A549 (cell line): ENCODE measurements at regions of chr1 and their contacts with region 1.

Region 1: GRCh38 chr1:152047730-152048402 is 11.1 kb upstream of the S100A11 start:
- DNase-seq: peak; percentile 83 to 100
- ATAC-seq: peak; percentile 95
- H3K4me3 ChIP-seq: peak overlapping the region; percentile 43
- H3K27ac ChIP-seq: peak overlapping the region; percentile 95 to 96
- H3K4me1 ChIP-seq: peaks cover 45% of the 10 kb centered on the region
- CTCF ChIP-seq: peak; percentile 57; the same call in 2 of the 3 replicates
- EP300 ChIP-seq: no peak; a peak in 1 of 5 replicates
- POLR2A ChIP-seq: peak; percentile 66
- RAD21 ChIP-seq: peak; percentile 32 to 45; a peak in 4 of 5 replicates

Region 2: DNA sequence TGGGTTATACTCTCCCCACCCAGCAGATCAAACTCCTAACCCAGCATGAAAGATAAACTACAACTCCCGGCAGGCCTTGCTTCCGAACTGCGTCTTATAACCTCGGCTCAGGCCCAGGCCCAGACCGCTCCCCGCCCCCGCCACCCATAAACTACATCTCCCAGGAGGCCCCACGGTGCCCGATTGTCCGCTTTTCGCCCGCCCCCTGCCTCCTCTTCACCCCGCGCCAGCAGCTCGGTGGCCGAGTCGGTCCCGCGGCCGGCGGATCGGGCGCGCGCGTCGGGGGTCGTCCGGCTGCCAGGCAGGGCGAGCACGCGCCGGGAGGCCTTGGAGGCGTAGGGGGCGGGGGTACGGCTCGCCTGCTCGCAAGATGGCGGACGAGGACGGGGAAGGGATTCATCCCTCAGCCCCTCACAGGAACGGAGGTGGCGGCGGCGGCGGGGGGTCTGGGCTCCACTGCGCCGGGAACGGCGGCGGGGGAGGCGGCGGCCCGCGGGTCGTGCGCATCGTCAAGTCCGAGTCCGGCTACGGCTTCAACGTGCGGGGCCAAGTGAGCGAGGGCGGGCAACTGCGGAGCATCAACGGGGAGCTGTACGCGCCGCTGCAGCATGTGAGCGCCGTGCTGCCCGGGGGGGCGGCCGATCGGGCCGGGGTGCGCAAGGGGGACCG is 435.9 kb before region 1 on chr1 and contains the start of gene SNX27:
- CTCF ChIA-PET with region 1: no interaction called
- POLR2A ChIA-PET with region 1: no interaction called
- DNase-seq: peak; percentile 94 to 95
- ATAC-seq: peak; percentile 90 to 93
- H3K4me3 ChIP-seq: peak within 1 kb of the TSS; percentile 88
- H3K27ac ChIP-seq: peak within 1 kb of the TSS; percentile 97 to 99
- H3K4me1 ChIP-seq: peaks cover 58% of the 10 kb centered on the region
- CTCF ChIP-seq: no peak
- EP300 ChIP-seq: no peak
- POLR2A ChIP-seq: peak; percentile 69; the same call in 1 of the 2 replicates
- RAD21 ChIP-seq: no peak
- polyA plus RNA-seq, gene SNX27: 29.1 and 30.5 TPM in 2 replicates

Region 3: DNA sequence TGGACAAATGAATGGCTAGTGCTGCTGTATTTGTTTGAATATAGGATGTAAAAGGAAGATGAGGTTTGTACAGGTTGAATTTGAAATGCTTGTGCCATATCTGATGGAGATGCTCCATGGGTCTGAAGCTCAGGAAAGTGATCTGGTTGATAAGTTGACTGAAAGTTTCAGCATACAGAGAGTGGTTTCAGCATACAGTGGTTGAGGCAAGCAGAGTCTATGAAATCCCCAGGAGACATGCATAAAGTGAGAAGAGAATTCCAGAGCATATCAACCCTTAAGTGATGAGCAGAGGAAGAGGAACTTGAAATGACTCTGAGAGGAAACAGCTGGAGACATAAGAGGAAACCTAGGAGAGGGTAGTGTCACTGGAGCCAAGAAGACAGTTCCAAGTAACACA is 19.3 kb after region 1 on chr1:
- CTCF ChIA-PET with region 1: interaction called, 26 read pairs
- POLR2A ChIA-PET with region 1: interaction called, 3 read pairs
- DNase-seq: no peak
- ATAC-seq: no peak
- H3K4me3 ChIP-seq: no peak overlapping the region
- H3K27ac ChIP-seq: no peak overlapping the region
- H3K4me1 ChIP-seq: no peaks in the 10 kb centered on the region
- CTCF ChIP-seq: no peak
- EP300 ChIP-seq: no peak
- POLR2A ChIP-seq: no peak
- RAD21 ChIP-seq: no peak

Region 4: DNA sequence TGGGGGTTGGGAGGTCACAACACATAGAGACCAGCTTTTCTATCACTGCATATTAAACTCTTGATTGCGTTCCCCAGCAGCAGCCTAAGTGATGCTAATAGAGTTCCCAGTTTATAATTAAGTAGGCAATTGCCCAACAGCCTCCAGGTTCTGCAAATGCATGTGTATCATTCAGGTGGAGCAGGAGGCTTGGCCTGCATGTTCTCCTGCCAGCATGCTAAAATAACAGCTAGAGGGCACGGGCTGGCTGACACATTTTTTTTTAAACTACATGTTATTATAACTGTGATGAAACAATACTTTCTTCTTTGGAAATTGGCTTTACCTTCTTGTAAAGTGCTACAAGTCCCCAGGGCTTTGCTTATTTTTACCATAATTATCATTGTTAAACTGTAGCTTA is 57.0 kb after region 1 on chr1:
- CTCF ChIA-PET with region 1: interaction called, 28 read pairs
- POLR2A ChIA-PET with region 1: interaction called, 20 read pairs
- DNase-seq: no peak
- ATAC-seq: no peak
- H3K4me3 ChIP-seq: no peak overlapping the region
- H3K27ac ChIP-seq: no peak overlapping the region
- H3K4me1 ChIP-seq: peaks cover 17% of the 10 kb centered on the region
- CTCF ChIP-seq: no peak
- EP300 ChIP-seq: no peak
- POLR2A ChIP-seq: no peak
- RAD21 ChIP-seq: no peak

Region 5: DNA sequence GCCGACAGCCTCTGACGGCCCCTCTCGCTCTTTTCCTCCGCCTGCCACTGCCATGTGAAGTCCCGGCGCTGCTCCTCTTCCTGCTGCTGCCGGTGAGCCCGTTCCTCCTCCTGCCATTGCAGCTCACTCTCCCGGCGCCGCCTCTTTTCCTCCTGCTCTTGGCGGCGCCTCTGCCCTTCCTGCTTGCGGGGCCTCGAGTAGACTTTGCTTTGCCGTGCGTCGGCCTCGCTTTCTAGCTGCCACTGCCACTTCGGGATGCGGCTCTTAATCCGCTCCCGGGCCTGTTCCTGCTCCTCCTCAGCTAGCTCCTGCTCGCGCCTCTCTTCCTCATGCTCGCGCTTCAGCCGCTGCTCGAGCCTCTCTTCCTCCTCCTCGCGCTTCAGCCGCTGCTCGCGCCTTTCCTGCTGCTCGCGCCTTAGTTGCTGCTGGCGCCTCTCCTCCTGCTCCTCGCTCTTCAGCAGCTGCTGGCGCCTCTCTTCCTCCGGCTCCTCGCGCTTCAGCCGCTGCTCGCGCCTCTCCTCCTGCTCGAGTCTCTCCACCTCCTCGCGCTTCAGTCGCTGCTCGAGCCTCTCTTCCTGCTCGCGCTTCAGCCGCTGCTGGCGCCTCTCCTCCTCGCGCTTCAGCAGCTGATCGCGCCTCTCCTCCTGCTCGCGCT is 63.1 kb after region 1 on chr1:
- CTCF ChIA-PET with region 1: interaction called, 28 read pairs
- POLR2A ChIA-PET with region 1: interaction called, 20 read pairs
- DNase-seq: peak; percentile 24 to 72
- ATAC-seq: peak; percentile 45 to 72
- H3K4me3 ChIP-seq: peak overlapping the region; percentile 49
- H3K27ac ChIP-seq: peak overlapping the region in 1 of 2 experiments; percentile 67; a peak in 3 of 6 replicates
- H3K4me1 ChIP-seq: peaks cover 28% of the 10 kb centered on the region
- CTCF ChIP-seq: no peak
- EP300 ChIP-seq: no peak
- POLR2A ChIP-seq: no peak
- RAD21 ChIP-seq: no peak

Region 6: DNA sequence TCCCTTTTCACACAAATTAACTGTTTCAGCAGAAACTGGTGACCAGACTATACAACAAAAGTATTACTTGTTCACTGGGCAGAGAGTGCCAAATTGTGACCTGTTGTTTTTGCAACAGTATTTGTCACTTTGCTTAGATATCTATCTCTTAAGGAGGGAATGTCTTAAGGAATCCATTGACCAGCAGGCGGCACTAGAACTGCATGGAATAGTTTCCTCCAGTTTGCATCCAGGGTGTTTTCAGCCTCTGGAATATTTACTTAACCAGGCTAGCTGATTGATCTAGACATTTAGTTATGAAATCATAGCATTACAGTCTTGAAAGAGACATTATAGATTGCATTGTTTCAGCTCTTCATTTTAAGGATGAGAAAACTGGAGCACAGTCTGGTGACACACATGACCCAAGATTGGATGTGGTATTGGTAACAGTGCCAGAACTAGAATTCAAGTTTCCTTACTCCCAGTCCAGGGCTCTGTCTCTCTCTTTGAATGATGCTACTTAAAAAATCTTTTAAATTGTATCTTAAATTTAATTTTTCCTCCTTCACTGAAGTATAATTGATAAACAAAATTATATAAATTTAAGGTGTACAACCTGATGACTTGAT is 94.2 kb after region 1 on chr1:
- CTCF ChIA-PET with region 1: interaction called, 14 read pairs
- POLR2A ChIA-PET with region 1: no interaction called
- DNase-seq: peak; percentile 38 to 78
- ATAC-seq: peak; percentile 92 to 94
- H3K4me3 ChIP-seq: no peak overlapping the region
- H3K27ac ChIP-seq: no peak overlapping the region
- H3K4me1 ChIP-seq: no peaks in the 10 kb centered on the region
- CTCF ChIP-seq: peak; percentile 98
- EP300 ChIP-seq: no peak
- POLR2A ChIP-seq: no peak
- RAD21 ChIP-seq: peak; percentile 96 to 97